Activated CD8-positive, alpha-beta T cell treated with anti-CD3 and anti-CD28 coated beads, Interleukin-2, amount 10 ng/mL, durations not matched to agents 7 days and 5 days (primary cell): ENCODE measurements at regions of chr7 and their contacts with region 1.

Region 1: GRCh38 chr7:127792528-127793342 is 140.7 kb downstream of the SND1 start:
- DNase-seq: peak; percentile 58
- ATAC-seq: peak; percentile 65
- H3K4me3 Mint-ChIP-seq: no peak overlapping the region
- H3K27ac Mint-ChIP-seq: no peak overlapping the region
- H3K4me1 Mint-ChIP-seq: peaks cover 5% of the 10 kb centered on the region
- H3K27me3 Mint-ChIP-seq: no peaks in the 10 kb centered on the region

Region 2: DNA sequence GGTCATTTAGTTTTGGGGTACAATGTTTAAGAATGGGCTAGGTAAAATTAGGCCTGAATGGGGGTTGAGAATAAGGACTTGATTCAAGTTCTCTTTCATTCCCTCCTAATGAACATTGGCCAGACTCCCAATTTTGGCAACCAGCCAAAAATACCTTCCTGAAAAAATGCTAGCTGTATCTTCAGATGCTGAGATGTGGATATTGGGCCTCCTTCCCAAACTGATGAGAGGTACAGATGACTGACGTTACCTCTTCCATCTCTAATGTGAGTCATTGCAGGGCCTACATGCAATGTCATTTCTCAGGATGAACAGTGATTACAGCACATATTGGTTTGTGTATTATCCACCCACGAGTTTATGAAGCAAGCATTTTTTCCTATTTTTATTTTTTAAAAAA is 10.9 kb after region 1 on chr7:
- CTCF ChIA-PET with region 1: interaction called, 16 read pairs
- POLR2A ChIA-PET with region 1: no interaction called
- DNase-seq: no peak
- ATAC-seq: no peak
- H3K4me3 Mint-ChIP-seq: no peak overlapping the region
- H3K27ac Mint-ChIP-seq: no peak overlapping the region
- H3K4me1 Mint-ChIP-seq: no peaks in the 10 kb centered on the region
- H3K27me3 Mint-ChIP-seq: no peaks in the 10 kb centered on the region